ENCODE measurements at regions of chr2 and their contacts with region 1.

Region 1: DNA sequence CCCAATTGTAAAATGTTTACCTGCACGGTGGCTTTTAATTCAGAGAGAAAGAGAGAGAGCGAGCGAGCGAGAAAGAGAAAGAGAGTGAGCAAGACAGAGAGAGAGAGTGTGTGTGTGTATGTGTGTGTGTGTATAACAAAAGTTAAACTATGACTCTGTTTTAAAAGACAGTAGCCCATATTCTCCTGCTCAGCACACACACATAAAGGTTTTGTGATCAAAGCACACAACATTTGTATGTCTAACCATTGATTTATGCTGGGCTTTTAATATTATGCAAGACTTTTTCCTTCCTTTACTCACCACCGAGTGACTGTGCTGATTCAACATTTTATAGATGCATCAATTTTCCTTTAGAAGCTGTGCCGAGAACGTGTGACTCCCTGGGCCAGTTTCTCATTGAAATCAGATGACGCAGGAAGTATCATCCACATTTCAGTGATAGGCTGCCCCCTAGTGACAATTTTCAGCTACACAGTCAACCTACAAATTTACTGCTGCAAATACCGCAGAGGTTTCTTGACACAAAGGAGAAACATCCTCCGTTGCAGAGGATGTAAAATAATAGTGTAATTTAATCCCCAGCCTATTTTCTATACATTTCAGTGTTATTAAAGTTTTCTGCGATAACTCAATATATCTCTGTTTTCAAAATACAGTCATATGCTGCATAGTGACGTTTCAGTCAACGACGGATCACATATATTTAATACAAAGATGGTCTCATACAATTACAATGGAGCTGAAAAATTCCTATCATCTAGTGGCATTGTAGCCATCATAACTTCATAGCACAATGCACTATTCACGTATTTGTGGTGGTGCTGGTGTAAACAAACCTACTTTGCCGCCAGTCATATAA is 165.9 kb upstream of the TANK start:
- DNase-seq: peak; percentile 77
- ATAC-seq: peak; percentile 91
- H3K4me3 ChIP-seq: no peak overlapping the region
- H3K27ac ChIP-seq: no peak overlapping the region
- H3K4me1 ChIP-seq: no peaks in the 10 kb centered on the region
- H3K27me3 ChIP-seq: no peaks in the 10 kb centered on the region; the same call in 1 of the 2 replicates
- CTCF ChIP-seq: peak; percentile 86

Region 2: DNA sequence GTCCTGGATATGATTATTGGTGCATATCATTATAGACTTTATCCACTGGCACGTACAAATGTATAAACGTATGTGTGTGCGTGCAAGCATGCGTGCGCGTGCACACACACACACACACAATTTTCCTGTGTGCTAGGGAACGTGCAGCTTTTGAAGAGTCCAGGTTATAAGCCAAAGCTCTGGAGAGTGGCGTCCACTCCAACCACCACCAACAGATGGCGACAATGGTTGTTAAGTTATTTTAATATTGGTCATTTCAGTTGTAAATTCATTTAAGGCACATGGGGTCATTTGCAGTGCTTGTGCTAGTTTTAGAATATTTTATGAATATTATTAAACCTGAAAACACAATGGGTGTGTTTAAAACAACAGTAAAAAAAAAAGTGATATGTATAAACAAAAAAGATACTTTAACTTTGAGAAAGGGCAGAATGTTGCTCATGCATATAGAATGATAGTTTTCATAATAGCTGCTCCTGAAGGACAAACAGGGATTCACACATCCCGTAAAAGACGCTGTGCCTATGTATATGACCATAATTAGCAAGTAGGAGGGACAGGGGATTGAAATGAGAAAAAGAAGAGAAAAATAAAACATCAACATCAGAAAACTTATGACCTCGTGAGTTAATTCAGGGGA is 670.1 kb before region 1 on chr2:
- CTCF ChIA-PET with region 1: interaction called, 5 read pairs
- POLR2A ChIA-PET with region 1: no interaction called
- in situ Hi-C with region 1: no loop called
- intact Hi-C with region 1: loop called (anchors 10 kb)
- DNase-seq: peak; percentile 35
- ATAC-seq: peak; percentile 87
- H3K4me3 ChIP-seq: no peak overlapping the region
- H3K27ac ChIP-seq: no peak overlapping the region
- H3K4me1 ChIP-seq: peaks cover 6% of the 10 kb centered on the region
- H3K27me3 ChIP-seq: no peaks in the 10 kb centered on the region
- CTCF ChIP-seq: peak; percentile 84

Measured in Panc1 (cell line).